ENCODE measurements at regions of chr5 and their contacts with region 1.

Region 1: GRCh38 chr5:135565725-135566421 is 12.9 kb downstream of the CXCL14 start:
- DNase-seq: no peak
- H3K4me3 ChIP-seq: no peak overlapping the region
- CTCF ChIP-seq: peak; percentile 87

Region 2: GRCh38 chr5:135488727-135489465 is 77.0 kb before region 1 on chr5:
- CTCF ChIA-PET with region 1: interaction called, 15 read pairs
- POLR2A ChIA-PET with region 1: no interaction called
- DNase-seq: no peak
- H3K4me3 ChIP-seq: peak overlapping the region; percentile 56
- CTCF ChIP-seq: no peak

Region 3: DNA sequence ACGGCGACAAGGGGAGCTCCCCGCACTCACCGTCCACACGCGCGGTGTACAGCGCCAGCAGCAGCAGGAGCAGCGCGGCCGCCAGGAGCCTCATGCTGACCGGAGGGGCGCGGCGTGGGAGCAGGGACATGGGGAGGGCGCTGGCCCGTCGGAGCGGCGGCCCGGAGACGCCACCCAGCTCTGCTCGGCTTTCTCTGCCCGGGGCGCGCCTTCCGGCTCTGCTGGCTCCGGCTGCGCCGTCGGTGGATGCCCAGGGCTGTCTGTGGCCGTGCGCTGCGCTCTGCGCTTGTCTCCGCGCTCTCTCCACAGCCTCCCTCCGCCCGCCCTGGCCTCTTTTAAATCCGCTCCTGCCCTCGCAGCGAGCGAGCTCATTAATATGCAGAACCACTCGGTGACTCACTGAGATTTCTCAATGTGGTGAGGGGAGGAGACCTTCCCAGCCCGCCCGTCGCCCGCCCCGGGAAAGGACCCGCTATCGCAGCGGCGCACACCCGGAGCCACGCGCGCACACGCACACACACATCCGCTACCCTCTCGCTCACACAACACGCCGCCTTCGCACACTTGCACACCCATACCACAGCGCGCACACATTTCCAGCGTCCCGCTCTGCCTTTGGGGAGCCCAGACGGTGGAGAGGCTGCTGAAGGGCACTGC is 12.9 kb after region 1 on chr5 and contains the start of gene CXCL14:
- CTCF ChIA-PET with region 1: interaction called, 180 read pairs
- POLR2A ChIA-PET with region 1: no interaction called
- DNase-seq: no peak
- H3K4me3 ChIP-seq: peak within 1 kb of the TSS; percentile 50
- CTCF ChIP-seq: no peak

Region 4: DNA sequence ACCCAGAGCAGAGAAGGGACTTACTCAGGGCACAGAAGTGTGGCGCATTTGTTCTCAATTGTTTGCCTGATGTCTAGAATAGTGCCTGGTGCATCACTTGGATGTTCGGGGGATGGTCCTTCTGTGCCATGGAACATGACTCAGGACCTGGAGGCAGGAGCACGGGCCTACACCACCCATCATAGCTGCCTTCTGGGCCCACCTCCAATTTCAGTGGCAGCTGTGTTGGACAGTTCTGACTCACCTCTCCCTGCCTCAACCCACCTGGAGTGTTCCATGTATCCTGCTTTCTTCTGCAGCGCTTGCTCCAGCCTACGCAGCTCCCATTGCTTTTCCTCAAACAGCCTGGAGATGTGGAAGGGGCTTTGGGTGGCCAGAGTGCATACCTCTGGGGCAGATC is 25.4 kb after region 1 on chr5:
- CTCF ChIA-PET with region 1: interaction called, 10 read pairs
- POLR2A ChIA-PET with region 1: no interaction called
- DNase-seq: no peak
- H3K4me3 ChIP-seq: no peak overlapping the region
- CTCF ChIP-seq: no peak

Region 5: DNA sequence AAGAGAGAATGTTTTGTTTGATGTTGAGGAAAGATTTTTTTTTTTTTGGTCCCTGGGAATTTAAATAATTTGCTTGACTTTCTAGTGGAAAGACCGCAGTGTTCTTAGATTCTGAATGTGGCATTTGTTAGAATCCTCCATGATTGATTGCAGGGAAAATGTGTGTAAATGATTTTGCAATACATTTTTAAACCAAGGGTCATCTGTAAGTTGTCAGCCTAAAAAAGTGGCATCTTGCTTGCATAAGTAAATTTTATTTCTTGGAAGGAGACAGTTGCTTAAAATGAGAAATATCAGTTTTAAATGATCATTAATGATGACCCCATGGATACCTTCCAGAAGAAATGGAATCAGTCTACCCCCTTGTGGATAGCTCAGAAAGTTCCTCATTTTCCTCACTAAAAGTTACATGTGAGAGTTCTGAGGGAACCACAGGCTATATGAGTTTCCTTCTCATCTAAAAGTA is 163.5 kb after region 1 on chr5:
- CTCF ChIA-PET with region 1: interaction called, 39 read pairs
- POLR2A ChIA-PET with region 1: no interaction called
- DNase-seq: no peak
- H3K4me3 ChIP-seq: no peak overlapping the region
- CTCF ChIP-seq: peak; percentile 6

Region 6: GRCh38 chr5:135821061-135821801 is 255.4 kb after region 1 on chr5:
- CTCF ChIA-PET with region 1: interaction called, 21 read pairs
- POLR2A ChIA-PET with region 1: no interaction called
- DNase-seq: no peak
- H3K4me3 ChIP-seq: no peak overlapping the region
- CTCF ChIP-seq: no peak

Region 7: DNA sequence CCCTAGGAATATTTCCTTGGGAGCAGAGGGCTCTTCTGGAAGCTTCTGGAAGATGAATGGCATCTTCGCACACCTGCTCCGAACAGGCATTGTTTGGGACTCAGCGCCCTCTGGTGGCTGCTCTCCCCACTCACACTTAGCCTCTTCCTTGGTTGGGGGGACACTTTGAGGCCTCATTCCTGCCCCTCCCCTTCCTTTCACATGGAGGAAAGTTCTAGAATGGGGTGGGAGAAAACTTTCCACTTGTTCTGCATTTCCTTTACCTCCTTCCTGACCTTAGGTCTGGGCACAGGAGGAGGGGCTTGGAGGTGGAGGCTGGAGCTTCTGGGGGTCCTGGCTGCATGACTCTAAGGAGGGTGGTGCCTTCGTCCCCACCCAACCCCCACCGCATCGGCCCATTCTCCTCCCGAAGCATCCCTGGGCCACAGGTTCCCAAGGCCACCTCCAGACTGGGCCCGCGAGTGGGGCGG is 646.4 kb after region 1 on chr5:
- CTCF ChIA-PET with region 1: interaction called, 11 read pairs
- POLR2A ChIA-PET with region 1: no interaction called
- DNase-seq: no peak
- H3K4me3 ChIP-seq: no peak overlapping the region
- CTCF ChIP-seq: peak; percentile 89

Measured in AG04449 (cell line).